IMR-90 (cell line): ENCODE measurements at regions of chr12 and their contacts with region 1.

Region 1: GRCh38 chr12:2783936-2784600 is 10.7 kb upstream of the FKBP4 start:
- DNase-seq: peak; percentile 44
- ATAC-seq: peak; percentile 99
- H3K4me3 ChIP-seq: no peak overlapping the region
- H3K27ac ChIP-seq: no peak overlapping the region
- H3K4me1 ChIP-seq: no peaks in the 10 kb centered on the region
- H3K27me3 ChIP-seq: peaks cover 44% of the 10 kb centered on the region
- CTCF ChIP-seq: peak; percentile 81
- POLR2A ChIP-seq: no peak
- RAD21 ChIP-seq: peak; percentile 71

Region 2: DNA sequence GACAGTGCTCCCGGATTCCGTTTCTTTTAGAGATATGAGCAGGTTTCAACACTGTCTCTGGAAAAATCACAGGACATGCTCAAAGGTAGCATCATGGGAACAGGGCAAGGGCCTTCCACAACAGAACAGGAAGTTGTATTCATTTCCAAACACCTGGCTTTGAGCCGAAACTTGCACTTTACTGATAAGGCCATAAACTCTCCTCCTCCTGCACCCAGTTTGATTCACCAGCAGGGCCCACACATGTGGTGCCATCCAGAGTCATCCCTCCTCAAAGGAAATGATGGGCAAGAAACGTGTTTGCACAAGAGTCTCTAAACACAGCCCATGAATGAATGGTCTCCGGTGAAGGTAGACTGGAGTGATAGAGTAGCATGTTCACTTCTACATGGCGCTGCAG is 257.7 kb before region 1 on chr12:
- CTCF ChIA-PET with region 1: no interaction called
- POLR2A ChIA-PET with region 1: no interaction called
- dilution Hi-C with region 1: no loop called
- in situ Hi-C with region 1: no loop called
- intact Hi-C with region 1: no loop called
- DNase-seq: no peak
- ATAC-seq: no peak
- H3K4me3 ChIP-seq: no peak overlapping the region
- H3K27ac ChIP-seq: no peak overlapping the region
- H3K4me1 ChIP-seq: no peaks in the 10 kb centered on the region
- H3K27me3 ChIP-seq: peaks cover 2% of the 10 kb centered on the region; the same call in 1 of the 2 replicates
- CTCF ChIP-seq: no peak
- POLR2A ChIP-seq: no peak
- RAD21 ChIP-seq: no peak

Region 3: GRCh38 chr12:2682296-2683251 is 101.5 kb before region 1 on chr12:
- CTCF ChIA-PET with region 1: interaction called, 5 read pairs
- POLR2A ChIA-PET with region 1: no interaction called
- dilution Hi-C with region 1: no loop called
- in situ Hi-C with region 1: no loop called
- intact Hi-C with region 1: loop called (anchors 5 kb)
- DNase-seq: peak; percentile 54
- ATAC-seq: peak; percentile 76
- H3K4me3 ChIP-seq: no peak overlapping the region
- H3K27ac ChIP-seq: no peak overlapping the region
- H3K4me1 ChIP-seq: no peaks in the 10 kb centered on the region
- H3K27me3 ChIP-seq: no peaks in the 10 kb centered on the region
- CTCF ChIP-seq: peak; percentile 59
- POLR2A ChIP-seq: no peak
- RAD21 ChIP-seq: peak; percentile 59